Mammary epithelial cell (primary cell): ENCODE measurements at regions of chr12 and their contacts with region 1.

Region 1: DNA sequence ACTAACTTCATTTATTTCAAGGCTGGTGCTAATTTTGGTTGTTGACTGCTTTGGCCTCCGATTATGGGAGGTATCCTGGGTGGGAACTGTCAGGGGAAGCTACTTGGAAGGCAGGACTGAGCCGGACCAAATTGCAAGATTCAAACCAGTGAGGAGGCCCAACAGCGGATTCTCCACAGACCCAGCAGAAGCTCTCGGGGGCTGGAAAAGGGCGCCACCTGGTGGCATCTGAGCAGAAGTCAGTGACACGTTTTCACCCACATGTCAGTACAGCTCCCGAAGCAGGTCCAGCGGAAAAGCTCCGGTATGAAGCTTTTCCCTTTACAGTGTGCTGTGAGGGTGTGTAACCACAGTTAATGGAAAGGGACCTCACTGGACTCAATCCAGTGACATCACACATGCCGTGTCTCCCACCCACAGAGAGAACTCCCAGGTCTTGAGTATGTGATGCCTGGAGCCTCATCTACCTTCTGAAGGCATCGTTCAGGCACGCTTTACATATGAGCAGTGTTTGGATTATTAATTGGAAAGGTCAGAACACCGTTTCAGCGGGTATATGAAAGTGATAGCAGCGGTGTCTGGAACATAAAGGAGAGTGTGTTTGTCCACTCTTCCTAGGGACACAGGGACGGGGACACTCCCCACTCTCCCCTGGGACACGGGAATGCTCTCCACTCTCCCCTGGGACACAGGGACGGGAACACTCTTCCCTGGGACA is 3.6 kb upstream of the P2RX2 start:
- DNase-seq: peak; percentile 74
- H3K4me3 ChIP-seq: no peak overlapping the region
- H3K27ac ChIP-seq: no peak overlapping the region
- H3K4me1 ChIP-seq: peaks cover 7% of the 10 kb centered on the region
- H3K27me3 ChIP-seq: peaks cover 18% of the 10 kb centered on the region
- CTCF ChIP-seq: peak; percentile 73 to 87

Region 2: DNA sequence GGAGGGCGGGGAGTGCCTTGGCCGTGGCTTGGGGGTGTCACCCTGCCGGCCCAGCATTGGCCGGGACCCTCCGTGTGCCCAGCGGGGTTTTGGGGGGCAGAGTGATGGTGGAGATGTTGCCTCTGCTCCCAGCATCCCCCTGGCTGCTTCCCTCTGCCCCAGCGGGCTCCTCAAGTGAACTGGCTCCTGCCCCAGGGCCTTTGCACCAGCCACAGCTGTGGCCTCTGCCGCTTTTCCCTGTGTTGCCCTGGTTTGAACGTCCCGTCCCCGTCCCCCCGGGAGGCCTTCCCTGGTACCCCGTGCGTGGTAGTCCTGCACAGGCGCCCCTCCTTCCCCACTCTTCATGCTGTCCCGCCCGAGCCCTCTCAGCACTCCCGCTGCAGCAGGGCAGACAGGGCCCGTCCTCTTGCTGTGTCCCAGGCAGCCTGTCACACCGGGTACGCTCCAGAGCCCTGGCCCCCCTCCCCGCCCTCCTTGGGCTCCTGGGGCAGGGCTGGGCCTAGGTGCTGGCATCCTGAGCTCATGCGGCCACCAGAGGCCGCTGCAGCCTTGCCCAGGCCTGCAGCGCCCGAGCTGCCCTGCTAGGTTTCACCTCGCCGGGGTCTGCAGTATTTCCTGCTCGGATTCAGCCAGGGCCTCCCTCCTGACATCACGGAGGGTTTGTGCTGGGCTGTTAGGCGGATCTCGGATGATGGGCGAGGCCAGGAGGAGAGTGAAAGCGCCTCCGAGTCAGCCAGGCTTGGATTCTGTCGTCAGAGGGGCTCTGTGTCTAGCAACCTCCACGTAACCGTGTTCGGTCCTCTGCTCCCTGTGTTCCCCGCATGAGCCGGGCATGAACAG is 461.3 kb before region 1 on chr12:
- CTCF ChIA-PET with region 1: no interaction called
- dilution Hi-C with region 1: no loop called
- in situ Hi-C with region 1: loop called (anchors 25 kb)
- intact Hi-C with region 1: loop called (anchors 1 kb)
- DNase-seq: peak; percentile 39
- H3K4me3 ChIP-seq: no peak overlapping the region
- H3K27ac ChIP-seq: no peak overlapping the region
- H3K4me1 ChIP-seq: peaks cover under 1% of the 10 kb centered on the region
- H3K27me3 ChIP-seq: no peaks in the 10 kb centered on the region
- CTCF ChIP-seq: peak; percentile 85 to 98

Region 3: GRCh38 chr12:132429946-132430643 is 184.9 kb before region 1 on chr12:
- CTCF ChIA-PET with region 1: no interaction called
- dilution Hi-C with region 1: no loop called
- in situ Hi-C with region 1: loop called in 1 of 2 experiments (anchors 10 kb)
- intact Hi-C with region 1: no loop called
- DNase-seq: peak; percentile 48
- H3K4me3 ChIP-seq: no peak overlapping the region
- H3K27ac ChIP-seq: no peak overlapping the region
- H3K4me1 ChIP-seq: peaks cover 25% of the 10 kb centered on the region
- H3K27me3 ChIP-seq: peaks cover 8% of the 10 kb centered on the region
- CTCF ChIP-seq: no peak

Region 4: DNA sequence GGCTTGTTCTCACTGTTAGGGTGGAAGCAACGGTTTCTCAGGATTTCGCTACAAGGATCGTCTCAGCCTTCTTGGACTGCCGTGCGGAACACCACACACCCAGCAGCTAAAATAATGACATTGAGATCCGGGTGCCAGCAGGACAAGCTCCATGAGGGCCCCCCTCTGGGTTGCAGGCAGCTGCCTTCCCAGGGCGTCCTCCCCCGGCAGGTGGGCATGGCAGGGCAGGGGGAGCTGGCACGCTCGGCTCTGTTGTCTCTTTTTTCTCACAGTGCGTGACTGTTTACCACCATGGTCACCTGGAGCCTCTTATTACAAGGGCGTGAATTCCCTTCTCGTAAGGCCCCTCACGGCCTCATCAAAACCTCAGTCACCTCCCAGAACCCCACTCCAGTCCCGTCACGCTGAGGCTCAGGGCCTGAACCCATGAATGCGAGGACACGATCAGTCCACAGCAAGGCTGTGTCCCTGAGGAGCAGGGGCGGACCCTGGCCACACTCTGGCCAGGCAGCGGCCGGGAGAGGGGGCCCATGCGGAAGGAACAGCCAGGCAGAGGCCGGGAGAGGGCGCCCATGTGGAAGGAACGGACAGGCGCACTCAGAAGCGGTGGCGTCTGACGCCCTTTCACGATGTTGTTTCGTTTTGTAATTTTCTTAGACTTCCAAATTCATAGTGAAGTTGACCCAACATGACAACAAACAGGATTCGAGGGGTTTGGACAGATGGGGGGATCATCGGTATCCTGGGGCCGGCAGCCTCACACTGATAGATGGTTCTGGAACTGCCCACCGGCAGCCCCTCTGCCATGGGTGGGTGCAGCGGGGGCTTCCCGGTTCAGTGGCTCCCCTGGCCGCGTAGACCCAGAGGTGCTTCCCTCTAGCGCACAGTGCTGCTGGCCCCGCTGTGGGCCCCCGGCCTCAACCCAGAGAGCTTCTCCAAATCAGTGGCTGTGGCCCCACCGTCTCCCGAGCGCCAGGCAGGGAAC is 14.7 kb before region 1 on chr12:
- CTCF ChIA-PET with region 1: no interaction called
- dilution Hi-C with region 1: no loop called
- in situ Hi-C with region 1: no loop called
- intact Hi-C with region 1: loop called (anchors 1 kb)
- DNase-seq: peak; percentile 53
- H3K4me3 ChIP-seq: peak overlapping the region; percentile 49 to 52 (median 50)
- H3K27ac ChIP-seq: no peak overlapping the region
- H3K4me1 ChIP-seq: peaks cover 9% of the 10 kb centered on the region
- H3K27me3 ChIP-seq: peaks cover 20% of the 10 kb centered on the region
- CTCF ChIP-seq: peak; percentile 47 to 80